CD8-positive, alpha-beta T cell (primary cell): ENCODE measurements at regions of chr19 and their contacts with region 1.

Region 1: DNA sequence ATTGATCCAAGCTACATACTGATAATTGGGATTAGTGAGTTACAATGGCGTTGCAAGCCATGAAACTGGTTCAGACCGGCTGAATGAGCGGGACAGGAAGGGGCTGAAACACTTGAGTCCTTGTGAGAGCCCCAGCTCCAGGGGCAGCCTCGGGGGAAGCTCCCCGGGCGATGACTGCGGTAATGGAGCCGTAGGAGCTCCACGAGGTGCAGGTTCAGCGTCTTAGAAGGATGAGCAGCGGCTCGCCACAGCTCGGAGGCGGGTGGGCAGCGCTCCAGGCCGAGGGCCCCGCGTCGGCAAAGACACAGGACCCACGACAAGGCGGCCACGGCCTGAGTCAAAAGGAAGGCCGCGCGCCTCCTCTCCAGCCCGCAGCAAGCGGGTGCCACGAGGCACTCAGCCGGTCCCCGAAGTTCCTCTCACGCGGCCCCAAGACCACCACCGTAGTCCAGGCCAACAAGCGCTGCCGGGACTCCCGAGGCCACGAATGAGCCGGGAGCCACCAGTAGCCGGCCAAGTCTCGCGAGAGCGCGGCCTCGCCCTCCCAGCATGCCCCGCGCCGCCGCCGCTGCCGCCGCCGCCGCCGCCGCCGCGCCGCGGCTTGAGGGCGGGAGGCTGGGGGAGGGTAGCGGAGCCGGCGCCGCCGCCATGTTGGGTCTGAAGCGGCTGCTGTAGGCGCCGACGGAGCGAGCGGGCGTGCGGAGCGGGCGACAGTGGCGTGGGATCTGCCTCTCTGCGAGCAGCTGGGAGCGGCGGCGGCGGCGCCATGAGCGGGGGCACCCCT is at the start of gene LSM14A:
- DNase-seq: peak; percentile 82 to 96 (median 92)
- ATAC-seq: peak; percentile 86
- H3K4me3 ChIP-seq: peak within 1 kb of the TSS; percentile 76 to 99
- H3K4me3 Mint-ChIP-seq: peak within 1 kb of the TSS; percentile 94
- H3K27ac ChIP-seq: peak within 1 kb of the TSS; percentile 94 to 98
- H3K27ac Mint-ChIP-seq: peak within 1 kb of the TSS; percentile 99
- H3K4me1 ChIP-seq: peaks cover 45% of the 10 kb centered on the region
- H3K4me1 Mint-ChIP-seq: peaks cover 46% of the 10 kb centered on the region
- H3K27me3 ChIP-seq: no peaks in the 10 kb centered on the region
- H3K27me3 Mint-ChIP-seq: no peaks in the 10 kb centered on the region
- CTCF ChIP-seq: no peak
- total RNA-seq, gene LSM14A: 233 to 246 TPM

Region 2: DNA sequence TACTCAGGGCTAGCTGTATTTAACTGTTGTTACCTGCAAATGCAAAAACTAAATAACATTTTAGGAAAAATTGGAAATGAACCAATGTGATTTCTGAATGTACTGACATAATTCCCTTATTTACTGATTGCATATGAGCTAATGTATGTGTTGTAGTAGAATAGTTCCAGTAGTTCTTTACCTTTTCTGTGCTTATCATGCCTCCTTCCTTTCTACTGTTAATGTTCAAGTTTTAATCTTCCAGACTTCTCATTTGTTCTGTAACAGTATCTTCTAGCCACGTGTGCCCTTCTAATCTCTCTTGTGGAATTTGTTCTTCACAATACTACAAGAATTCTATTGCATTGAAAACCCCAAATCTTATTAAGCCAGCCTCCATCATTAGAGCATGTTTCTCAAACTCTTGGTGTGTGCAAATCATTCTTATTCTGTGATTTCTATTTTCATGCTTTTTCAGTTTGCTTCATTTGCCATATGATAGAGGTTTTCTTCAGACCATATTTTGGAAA is 17.9 kb after region 1 on chr19:
- CTCF ChIA-PET with region 1: no interaction called
- POLR2A ChIA-PET with region 1: interaction called, 4 read pairs
- intact Hi-C with region 1: loop called in 1 of 2 experiments (anchors 2 kb)
- DNase-seq: no peak
- ATAC-seq: no peak
- H3K4me3 ChIP-seq: no peak overlapping the region
- H3K4me3 Mint-ChIP-seq: peak overlapping the region; percentile 1
- H3K27ac ChIP-seq: no peak overlapping the region
- H3K27ac Mint-ChIP-seq: peak overlapping the region; percentile 8
- H3K4me1 ChIP-seq: peaks cover 57% of the 10 kb centered on the region
- H3K4me1 Mint-ChIP-seq: peaks cover 70% of the 10 kb centered on the region
- H3K27me3 ChIP-seq: no peaks in the 10 kb centered on the region
- H3K27me3 Mint-ChIP-seq: no peaks in the 10 kb centered on the region
- CTCF ChIP-seq: no peak

Region 3: GRCh38 chr19:34253699-34254551 is 81.9 kb after region 1 on chr19:
- CTCF ChIA-PET with region 1: no interaction called
- POLR2A ChIA-PET with region 1: interaction called, 3 read pairs
- intact Hi-C with region 1: loop called in 1 of 2 experiments (anchors 2 kb)
- DNase-seq: peak in 4 of 9 experiments; percentile 68 to 91 (median 86)
- ATAC-seq: peak; percentile 39
- H3K4me3 ChIP-seq: peak overlapping the region; percentile 78 to 84
- H3K4me3 Mint-ChIP-seq: peak overlapping the region; percentile 98
- H3K27ac ChIP-seq: peak overlapping the region; percentile 87 to 91
- H3K27ac Mint-ChIP-seq: peak overlapping the region; percentile 99
- H3K4me1 ChIP-seq: peaks cover 31% of the 10 kb centered on the region
- H3K4me1 Mint-ChIP-seq: peaks cover 31% of the 10 kb centered on the region
- H3K27me3 ChIP-seq: no peaks in the 10 kb centered on the region
- H3K27me3 Mint-ChIP-seq: no peaks in the 10 kb centered on the region
- CTCF ChIP-seq: no peak

Region 4: DNA sequence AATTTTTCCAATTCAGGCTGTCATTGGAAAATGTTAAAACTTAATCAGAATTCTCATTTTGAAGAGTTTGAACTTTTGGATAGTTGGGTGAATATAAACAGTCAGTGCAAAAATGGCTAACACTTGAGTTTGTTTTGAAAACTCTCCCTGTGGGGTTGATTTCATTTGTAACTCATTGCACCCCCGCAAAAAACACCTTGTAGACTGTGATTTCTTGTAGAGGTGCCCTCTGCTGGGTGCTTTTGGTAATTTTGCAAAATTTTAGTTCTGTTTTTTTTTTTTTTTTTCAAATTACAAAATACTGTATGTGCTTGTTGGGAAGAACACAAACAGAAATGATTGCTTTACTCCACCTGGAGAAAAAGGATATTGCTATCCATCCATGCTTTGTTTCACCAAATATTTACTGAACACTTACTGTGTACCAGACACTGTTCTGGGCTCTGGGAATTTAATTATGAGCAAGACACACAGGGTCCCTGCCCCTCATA is 164.8 kb after region 1 on chr19:
- CTCF ChIA-PET with region 1: interaction called, 3 read pairs
- POLR2A ChIA-PET with region 1: interaction called, 3 read pairs
- intact Hi-C with region 1: loop called in 1 of 2 experiments (anchors 2 kb)
- DNase-seq: peak in 7 of 9 experiments; percentile 20 to 76 (median 56)
- ATAC-seq: peak; percentile 70
- H3K4me3 ChIP-seq: no peak overlapping the region
- H3K4me3 Mint-ChIP-seq: no peak overlapping the region
- H3K27ac ChIP-seq: no peak overlapping the region
- H3K27ac Mint-ChIP-seq: peak overlapping the region; percentile 57
- H3K4me1 ChIP-seq: peaks cover 8% of the 10 kb centered on the region
- H3K4me1 Mint-ChIP-seq: peaks cover 7% of the 10 kb centered on the region
- H3K27me3 ChIP-seq: no peaks in the 10 kb centered on the region
- H3K27me3 Mint-ChIP-seq: no peaks in the 10 kb centered on the region
- CTCF ChIP-seq: peak; percentile 92

Region 5: GRCh38 chr19:34364830-34365462 is 192.9 kb after region 1 on chr19 and contains the start of gene GPI:
- CTCF ChIA-PET with region 1: no interaction called
- POLR2A ChIA-PET with region 1: interaction called, 10 read pairs
- intact Hi-C with region 1: no loop called
- DNase-seq: peak; percentile 29 to 82 (median 66)
- ATAC-seq: peak; percentile 90
- H3K4me3 ChIP-seq: peak within 1 kb of the TSS; percentile 83 to 93
- H3K4me3 Mint-ChIP-seq: peak within 1 kb of the TSS; percentile 95
- H3K27ac ChIP-seq: peak within 1 kb of the TSS; percentile 66 to 72
- H3K27ac Mint-ChIP-seq: peak within 1 kb of the TSS; percentile 90
- H3K4me1 ChIP-seq: peaks cover 20% of the 10 kb centered on the region
- H3K4me1 Mint-ChIP-seq: peaks cover 38% of the 10 kb centered on the region
- H3K27me3 ChIP-seq: no peaks in the 10 kb centered on the region
- H3K27me3 Mint-ChIP-seq: no peaks in the 10 kb centered on the region
- CTCF ChIP-seq: no peak
- total RNA-seq, gene GPI: 84.8 to 87.0 TPM

Region 6: DNA sequence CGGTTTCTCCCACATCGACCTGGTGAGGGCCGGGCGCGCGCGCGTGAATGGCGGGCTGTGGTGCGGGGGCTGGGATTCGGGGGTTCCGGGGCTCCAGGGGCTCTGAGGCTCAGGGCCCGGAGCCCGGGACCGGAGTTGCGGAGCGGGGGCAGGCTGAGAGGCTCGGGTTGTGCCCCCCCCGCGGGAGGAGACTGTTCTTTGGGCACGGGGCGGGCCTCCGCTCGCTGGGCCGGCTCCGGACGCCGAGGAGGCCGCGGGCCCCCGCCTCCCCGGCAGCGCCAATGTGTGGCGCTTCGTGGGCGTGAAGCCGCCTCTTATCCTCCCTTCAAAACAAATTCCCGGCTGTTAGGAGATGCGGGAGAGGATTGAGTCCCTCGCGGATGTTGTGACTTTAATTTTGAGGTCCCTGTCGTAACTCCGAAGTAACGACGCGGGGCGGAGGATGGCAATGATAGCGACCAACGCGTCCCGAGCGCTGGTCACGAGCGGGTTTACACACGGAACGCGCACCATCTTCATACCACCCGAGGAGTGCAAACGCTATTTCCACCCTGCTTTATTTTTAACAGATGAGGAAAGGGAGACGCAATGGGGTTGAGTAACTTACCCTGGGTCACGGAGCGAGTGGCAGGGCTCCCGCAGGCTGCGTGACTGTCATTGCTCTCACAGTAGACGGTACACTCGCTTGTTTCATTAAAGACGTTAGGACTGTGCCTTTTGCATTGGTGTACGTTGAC is 256.6 kb after region 1 on chr19:
- CTCF ChIA-PET with region 1: no interaction called
- POLR2A ChIA-PET with region 1: no interaction called
- intact Hi-C with region 1: loop called in 1 of 2 experiments (anchors 1 kb)
- DNase-seq: peak in 5 of 9 experiments; percentile 24 to 61 (median 35)
- ATAC-seq: peak; percentile 43
- H3K4me3 ChIP-seq: peak overlapping the region; percentile 58 to 84
- H3K4me3 Mint-ChIP-seq: peak overlapping the region; percentile 99
- H3K27ac ChIP-seq: peak overlapping the region; percentile 76 to 82
- H3K27ac Mint-ChIP-seq: peak overlapping the region; percentile 96
- H3K4me1 ChIP-seq: peaks cover 29% of the 10 kb centered on the region
- H3K4me1 Mint-ChIP-seq: peaks cover 41% of the 10 kb centered on the region
- H3K27me3 ChIP-seq: no peaks in the 10 kb centered on the region
- H3K27me3 Mint-ChIP-seq: no peaks in the 10 kb centered on the region
- CTCF ChIP-seq: no peak